ENCODE measurements at regions of chr2 and their contacts with region 1.

Region 1: DNA sequence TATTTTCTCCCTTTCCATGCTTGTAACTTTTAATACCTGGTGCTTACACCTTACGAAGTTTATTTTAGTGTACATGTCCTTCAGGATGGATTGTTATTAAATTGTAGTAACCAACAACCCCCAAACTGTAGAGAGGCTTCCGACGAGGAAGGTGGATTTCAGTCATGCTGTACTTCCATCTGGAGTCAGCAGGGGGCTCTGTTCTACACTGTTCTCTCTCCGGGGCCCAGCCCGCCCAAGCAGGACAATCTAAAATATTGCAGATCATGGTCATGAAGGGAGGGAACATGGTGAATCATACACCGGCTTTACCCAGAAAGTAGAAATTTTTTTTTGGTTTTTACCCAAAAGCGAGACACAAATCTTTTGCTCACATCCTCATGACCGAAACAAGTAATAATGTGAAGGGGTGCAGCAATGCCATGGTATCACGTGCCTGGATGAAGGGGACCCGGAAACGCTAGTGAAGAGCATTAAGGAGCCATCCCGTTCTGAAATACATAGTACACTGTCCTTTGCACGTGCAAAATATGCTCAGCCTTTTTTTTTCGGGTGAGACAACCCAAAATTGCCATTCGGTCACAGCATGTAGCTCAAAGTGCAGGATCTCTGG is 884.8 kb downstream of the EPHA4 start:
- DNase-seq: peak; percentile 69
- H3K4me3 ChIP-seq: no peak overlapping the region
- H3K27ac ChIP-seq: no peak overlapping the region
- H3K4me1 ChIP-seq: no peaks in the 10 kb centered on the region
- H3K27me3 ChIP-seq: no peaks in the 10 kb centered on the region
- CTCF ChIP-seq: peak; percentile 79

Region 2: DNA sequence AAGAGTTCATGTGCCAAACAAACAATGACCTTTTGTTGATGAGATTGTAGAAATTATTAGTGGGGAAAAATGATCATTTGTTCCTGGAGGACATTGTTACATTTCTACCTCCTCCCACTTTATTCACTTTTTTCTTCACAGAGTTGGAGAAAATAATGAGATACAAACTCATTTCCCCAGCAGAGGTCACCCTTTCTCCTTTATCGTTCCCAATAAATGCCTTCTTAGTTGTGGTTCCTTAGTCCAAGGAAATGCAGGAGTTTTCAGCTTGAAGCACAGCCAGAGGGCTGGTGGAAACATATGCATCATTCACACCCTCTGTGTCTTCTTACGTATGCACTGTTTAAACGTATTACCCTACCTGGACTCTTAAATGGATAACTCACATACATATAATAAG is 951.1 kb before region 1 on chr2:
- intact Hi-C with region 1: loop called (anchors 10 kb)
- DNase-seq: peak; percentile 22
- H3K4me3 ChIP-seq: no peak overlapping the region
- H3K27ac ChIP-seq: no peak overlapping the region
- H3K4me1 ChIP-seq: no peaks in the 10 kb centered on the region
- H3K27me3 ChIP-seq: no peaks in the 10 kb centered on the region
- CTCF ChIP-seq: no peak

Region 3: GRCh38 chr2:220569112-220569897 is 118.0 kb before region 1 on chr2:
- intact Hi-C with region 1: no loop called
- DNase-seq: no peak
- H3K4me3 ChIP-seq: no peak overlapping the region
- H3K27ac ChIP-seq: no peak overlapping the region
- H3K4me1 ChIP-seq: no peaks in the 10 kb centered on the region
- H3K27me3 ChIP-seq: no peaks in the 10 kb centered on the region
- CTCF ChIP-seq: no peak

Region 4: DNA sequence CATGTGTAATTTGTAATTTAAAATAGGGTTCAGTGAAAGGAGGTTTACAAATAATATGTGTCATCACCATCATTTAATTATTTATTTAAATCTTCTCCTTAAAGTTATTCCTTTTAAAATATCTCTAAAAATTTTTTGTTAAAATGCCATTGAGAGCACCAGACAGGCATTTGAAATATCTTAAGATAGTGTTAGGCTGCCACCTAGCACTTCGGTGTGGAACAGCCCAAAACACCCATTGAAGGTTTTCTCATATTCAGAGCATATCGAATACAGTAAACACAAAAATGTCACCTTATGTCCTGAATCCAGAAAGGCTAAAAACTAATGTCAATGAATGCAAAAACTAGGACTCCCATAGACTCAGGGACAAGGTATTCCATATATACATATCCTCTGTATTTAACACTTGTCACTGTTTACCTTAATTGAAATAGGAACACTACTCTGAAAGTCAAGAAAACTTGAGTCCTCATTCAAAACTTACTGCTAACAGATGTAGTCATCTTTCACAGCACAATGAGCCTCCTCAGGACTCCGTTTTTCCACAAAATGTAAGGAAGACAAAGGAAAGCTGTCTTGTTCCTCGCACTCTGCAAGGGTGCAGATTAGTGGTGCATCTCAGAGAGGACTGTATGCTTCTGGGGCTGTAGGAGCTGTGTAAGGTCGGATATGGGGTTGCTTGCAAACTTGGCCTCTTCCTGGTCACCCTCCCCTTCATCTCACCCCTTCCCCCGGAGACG is 1281.9 kb after region 1 on chr2:
- intact Hi-C with region 1: loop called (anchors 10 kb)
- DNase-seq: no peak
- H3K4me3 ChIP-seq: no peak overlapping the region
- H3K27ac ChIP-seq: no peak overlapping the region
- H3K4me1 ChIP-seq: no peaks in the 10 kb centered on the region
- H3K27me3 ChIP-seq: no peaks in the 10 kb centered on the region
- CTCF ChIP-seq: peak; percentile 60